ENCODE measurements at regions of chr7 and their contacts with region 1.

Region 1: DNA sequence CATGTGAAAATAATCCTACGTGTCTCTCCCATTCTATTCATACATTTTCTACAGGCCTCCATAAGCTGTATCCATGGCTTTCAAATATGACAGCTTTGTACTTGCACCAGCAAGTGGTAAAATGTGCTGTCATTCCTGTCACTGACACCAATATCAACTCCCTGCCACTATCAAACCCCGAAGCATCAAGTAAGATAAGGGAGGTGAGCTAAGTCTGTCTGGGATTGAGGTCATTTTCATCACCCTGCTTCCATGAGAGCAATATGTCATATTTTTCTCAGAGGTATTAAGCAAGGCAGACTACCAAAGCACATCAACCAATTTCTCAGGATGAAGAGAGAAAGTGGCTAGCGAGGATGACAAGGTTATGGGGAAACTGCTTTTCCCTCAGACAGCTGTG is 11.1 kb downstream of the GPR22 start:
- DNase-seq: no peak
- ATAC-seq: peak; percentile 94

Region 2: GRCh38 chr7:107224374-107225223 is 256.3 kb before region 1 on chr7:
- intact Hi-C with region 1: loop called (anchors 5 kb)
- DNase-seq: no peak
- ATAC-seq: peak; percentile 38

Region 3: GRCh38 chr7:107501593-107501992 is 20.7 kb after region 1 on chr7:
- intact Hi-C with region 1: no loop called
- DNase-seq: no peak
- ATAC-seq: no peak

Region 4: GRCh38 chr7:107563775-107564552 is 83.0 kb after region 1 on chr7 and contains the starts of genes COG5 and DUS4L:
- intact Hi-C with region 1: loop called (anchors 5 kb)
- DNase-seq: peak; percentile 92
- ATAC-seq: peak; percentile 94
- total RNA-seq, gene COG5: 55.8 TPM
- total RNA-seq, gene DUS4L: 7.7 TPM

Region 5: GRCh38 chr7:108324053-108325038 is 843.4 kb after region 1 on chr7:
- intact Hi-C with region 1: no loop called
- DNase-seq: no peak
- ATAC-seq: no peak

Measured in Right ventricle myocardium inferior (tissue), 1 donor.